K562 (cell line): ENCODE measurements at regions of chr11 and their contacts with region 1.

Region 1: DNA sequence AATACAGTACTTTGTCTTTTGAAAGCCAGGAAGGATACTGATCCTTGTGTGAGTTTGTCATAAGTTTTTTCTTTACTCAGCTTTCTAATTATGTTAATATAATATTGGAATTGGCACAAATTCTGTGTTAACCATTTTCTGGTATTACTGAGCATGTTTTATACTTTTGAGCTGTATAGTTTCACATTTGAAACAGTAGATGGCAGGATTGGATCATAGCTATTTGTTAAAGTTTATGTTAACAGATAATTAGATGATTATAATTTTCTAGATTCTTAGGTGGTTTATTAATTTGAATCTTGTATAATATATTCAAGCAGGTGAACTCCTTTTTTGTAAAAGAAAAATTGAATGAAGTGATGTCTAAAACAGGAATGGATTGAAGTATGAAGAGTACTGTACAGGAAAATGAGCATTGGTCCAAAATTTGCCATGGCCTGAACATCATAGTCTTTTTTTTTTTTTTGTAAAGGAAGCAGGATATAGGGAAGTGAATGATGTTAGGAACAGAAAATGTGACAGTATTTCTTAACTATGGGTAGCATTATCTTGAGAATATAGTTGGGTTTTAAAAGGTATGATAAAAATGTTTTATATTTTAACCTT is 102.0 kb downstream of the CYP2R1 start:
- DNase-seq: peak in 1 of 4 experiments; percentile 9
- ATAC-seq: no peak
- H3K4me3 ChIP-seq: no peak overlapping the region
- H3K27ac ChIP-seq: no peak overlapping the region
- H3K4me1 ChIP-seq: no peaks in the 10 kb centered on the region
- H3K27me3 ChIP-seq: no peaks in the 10 kb centered on the region
- CTCF ChIP-seq: peak in 2 of 3 experiments; percentile 34 to 58; a peak in 3 of 6 replicates
- EP300 ChIP-seq: no peak
- POLR2A ChIP-seq: no peak
- RAD21 ChIP-seq: peak; percentile 72 to 76

Region 2: GRCh38 chr11:14537134-14537599 is 252.8 kb before region 1 on chr11:
- CTCF ChIA-PET with region 1: no interaction called
- POLR2A ChIA-PET with region 1: no interaction called
- in situ Hi-C with region 1: no loop called
- intact Hi-C with region 1: loop called (anchors 5 kb)
- DNase-seq: peak; percentile 54 to 64 (median 61)
- ATAC-seq: peak; percentile 80
- H3K4me3 ChIP-seq: no peak overlapping the region
- H3K27ac ChIP-seq: peak overlapping the region; percentile 14; the same call in 1 of the 3 replicates
- H3K4me1 ChIP-seq: peaks cover 0 to 7% of the 10 kb centered on the region in 2 experiments; a peak in 3 of 5 replicates
- H3K27me3 ChIP-seq: no peaks in the 10 kb centered on the region
- CTCF ChIP-seq: peak; percentile 49 to 84 (median 72); a peak in 5 of 6 replicates
- EP300 ChIP-seq: no peak
- POLR2A ChIP-seq: no peak
- RAD21 ChIP-seq: peak; percentile 58 to 79

Region 3: DNA sequence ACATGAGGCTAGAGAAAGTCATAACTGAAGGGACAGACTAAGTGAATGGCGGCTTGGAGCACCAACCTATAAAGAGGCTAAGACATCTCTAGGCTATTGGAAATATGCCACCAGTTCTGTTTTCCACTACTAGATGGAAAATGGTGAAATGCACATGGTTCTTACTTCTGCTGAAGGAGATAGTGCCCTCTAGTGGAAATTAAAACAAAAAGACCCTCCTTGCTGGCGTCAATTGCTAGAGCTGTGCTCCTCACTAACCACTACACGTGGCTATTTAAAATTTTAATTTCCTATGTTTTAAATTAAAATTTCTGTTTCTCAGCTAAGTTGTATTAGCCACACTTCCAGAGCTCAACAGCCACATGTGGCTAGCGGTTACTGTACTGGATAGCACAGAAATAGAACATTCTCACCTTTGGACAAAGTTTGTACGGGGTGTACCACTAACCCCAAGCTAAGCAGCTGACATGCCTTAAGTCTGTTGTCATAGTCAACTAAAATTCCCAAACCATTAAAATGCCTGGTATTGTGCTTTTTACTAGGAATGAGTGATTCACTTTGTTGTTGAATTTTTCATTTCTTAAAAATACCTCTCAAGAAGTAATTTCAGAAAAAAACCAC is 216.3 kb after region 1 on chr11:
- CTCF ChIA-PET with region 1: no interaction called
- POLR2A ChIA-PET with region 1: no interaction called
- in situ Hi-C with region 1: no loop called
- intact Hi-C with region 1: loop called (anchors 5 kb)
- DNase-seq: peak; percentile 19 to 59 (median 29)
- ATAC-seq: peak; percentile 95
- H3K4me3 ChIP-seq: no peak overlapping the region
- H3K27ac ChIP-seq: no peak overlapping the region
- H3K4me1 ChIP-seq: no peaks in the 10 kb centered on the region
- H3K27me3 ChIP-seq: no peaks in the 10 kb centered on the region
- CTCF ChIP-seq: peak; percentile 62 to 77 (median 66)
- EP300 ChIP-seq: no peak
- POLR2A ChIP-seq: no peak
- RAD21 ChIP-seq: peak; percentile 33 to 76; a peak in 3 of 4 replicates

Region 4: DNA sequence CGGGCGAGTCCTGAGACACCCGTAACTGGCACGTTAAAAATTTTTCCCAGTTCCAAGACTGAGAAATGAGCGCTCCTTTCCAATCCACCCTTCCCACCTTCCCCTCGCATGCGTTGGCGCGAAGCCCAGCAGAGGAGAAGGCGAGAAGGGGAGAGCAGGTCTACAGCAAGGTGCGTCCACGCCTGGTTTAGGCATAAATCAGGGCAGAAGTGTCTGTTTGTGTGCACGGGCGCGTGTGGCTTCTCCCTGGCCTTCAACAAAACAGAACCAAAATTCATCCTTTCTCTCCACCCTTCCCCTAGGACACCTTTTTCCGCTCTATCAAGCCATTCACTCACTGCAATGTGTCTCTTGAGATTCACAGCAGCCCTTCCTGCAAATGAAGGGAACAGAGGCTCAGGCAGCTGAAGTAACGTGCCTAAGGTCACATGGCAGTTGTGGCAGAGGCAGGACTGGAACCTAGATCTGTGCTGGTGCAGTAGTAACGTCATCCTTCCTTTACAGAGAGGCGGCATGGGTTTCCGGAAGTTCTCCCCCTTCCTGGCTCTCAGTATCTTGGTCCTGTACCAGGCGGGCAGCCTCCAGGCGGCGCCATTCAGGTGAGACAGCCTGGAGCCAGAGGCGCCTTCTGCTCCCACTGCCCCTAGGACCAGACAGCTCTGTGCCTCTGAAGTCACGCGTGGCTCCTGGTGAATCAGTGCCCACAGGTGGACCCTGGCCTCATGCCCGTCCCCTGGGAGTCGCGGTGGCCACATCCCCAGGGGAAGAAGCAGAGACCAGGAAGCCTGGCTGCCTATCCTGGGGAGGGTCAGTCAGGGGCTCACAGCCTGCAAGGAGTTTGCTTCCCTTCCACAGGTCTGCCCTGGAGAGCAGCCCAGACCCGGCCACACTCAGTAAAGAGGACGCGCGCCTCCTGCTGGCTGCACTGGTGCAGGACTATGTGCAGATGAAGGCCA is 284.5 kb after region 1 on chr11:
- CTCF ChIA-PET with region 1: interaction called, 7 read pairs
- POLR2A ChIA-PET with region 1: no interaction called
- in situ Hi-C with region 1: no loop called
- intact Hi-C with region 1: loop called (anchors 10 kb)
- DNase-seq: peak; percentile 51 to 77 (median 52)
- ATAC-seq: peak; percentile 99
- H3K4me3 ChIP-seq: no peak overlapping the region
- H3K27ac ChIP-seq: no peak overlapping the region
- H3K4me1 ChIP-seq: peaks cover 0 to 11% of the 10 kb centered on the region in 2 experiments; a peak in 2 of 5 replicates
- H3K27me3 ChIP-seq: peaks cover 3 to 31% of the 10 kb centered on the region in 2 experiments; a peak in 4 of 5 replicates
- CTCF ChIP-seq: peak; percentile 76 to 79 (median 78)
- EP300 ChIP-seq: no peak
- POLR2A ChIP-seq: no peak
- RAD21 ChIP-seq: peak; percentile 75 to 81

Region 5: GRCh38 chr11:15208378-15209222 is 418.6 kb after region 1 on chr11:
- CTCF ChIA-PET with region 1: interaction called, 5 read pairs
- POLR2A ChIA-PET with region 1: no interaction called
- in situ Hi-C with region 1: no loop called
- intact Hi-C with region 1: loop called (anchors 2 kb)
- DNase-seq: peak; percentile 74 to 86 (median 84)
- ATAC-seq: peak; percentile 99
- H3K4me3 ChIP-seq: no peak overlapping the region
- H3K27ac ChIP-seq: no peak overlapping the region
- H3K4me1 ChIP-seq: no peaks in the 10 kb centered on the region
- H3K27me3 ChIP-seq: no peaks in the 10 kb centered on the region; a peak in 1 of 5 replicates
- CTCF ChIP-seq: peak; percentile 83 to 88 (median 86)
- EP300 ChIP-seq: no peak
- POLR2A ChIP-seq: no peak
- RAD21 ChIP-seq: peak; percentile 83 to 87